Posterior vena cava (tissue), 2 donors: ENCODE measurements at regions of chr16 and their contacts with region 1.

Region 1: GRCh38 chr16:73047518-73048291 is at the start of gene ZFHX3:
- DNase-seq: peak; percentile 93
- total RNA-seq, gene ZFHX3: 40.8 to 43.7 TPM

Region 2: GRCh38 chr16:72832621-72833248 is 215.0 kb before region 1 on chr16:
- intact Hi-C with region 1: loop called in 1 of 2 experiments (anchors 10 kb)
- DNase-seq: peak; percentile 94

Region 3: GRCh38 chr16:72850853-72851252 is 196.9 kb before region 1 on chr16:
- intact Hi-C with region 1: loop called in 1 of 2 experiments (anchors 5 kb)
- DNase-seq: no peak

Region 4: GRCh38 chr16:72942021-72942420 is 105.7 kb before region 1 on chr16:
- intact Hi-C with region 1: loop called in 1 of 2 experiments (anchors 5 kb)
- DNase-seq: no peak

Region 5: GRCh38 chr16:73015612-73016487 is 31.9 kb before region 1 on chr16:
- intact Hi-C with region 1: no loop called
- DNase-seq: no peak

Region 6: GRCh38 chr16:73027685-73028111 is 20.0 kb before region 1 on chr16:
- intact Hi-C with region 1: loop called in 1 of 2 experiments (anchors 2 kb)
- DNase-seq: no peak

Region 7: GRCh38 chr16:73131156-73131862 is 83.6 kb after region 1 on chr16:
- intact Hi-C with region 1: no loop called
- DNase-seq: no peak